CD8-positive, alpha-beta T cell (primary cell): ENCODE measurements at regions of chr6 and their contacts with region 1.

Region 1: GRCh38 chr6:26156076-26156849 is 69.0 kb downstream of the HFE start:
- DNase-seq: peak; percentile 77 to 96 (median 84)
- ATAC-seq: peak; percentile 39
- H3K4me3 ChIP-seq: peak overlapping the region; percentile 51 to 86
- H3K4me3 Mint-ChIP-seq: peak overlapping the region; percentile 94
- H3K27ac ChIP-seq: peak overlapping the region; percentile 85 to 98
- H3K27ac Mint-ChIP-seq: peak overlapping the region; percentile 98
- H3K4me1 ChIP-seq: peaks cover 20% of the 10 kb centered on the region
- H3K4me1 Mint-ChIP-seq: peaks cover 34% of the 10 kb centered on the region
- H3K27me3 ChIP-seq: no peaks in the 10 kb centered on the region
- H3K27me3 Mint-ChIP-seq: no peaks in the 10 kb centered on the region
- CTCF ChIP-seq: no peak

Region 2: GRCh38 chr6:25556516-25556915 is 599.7 kb before region 1 on chr6:
- CTCF ChIA-PET with region 1: no interaction called
- POLR2A ChIA-PET with region 1: no interaction called
- intact Hi-C with region 1: no loop called
- DNase-seq: peak; percentile 61 to 83 (median 76)
- ATAC-seq: peak; percentile 54
- H3K4me3 ChIP-seq: no peak overlapping the region
- H3K4me3 Mint-ChIP-seq: no peak overlapping the region
- H3K27ac ChIP-seq: no peak overlapping the region
- H3K27ac Mint-ChIP-seq: no peak overlapping the region
- H3K4me1 ChIP-seq: no peaks in the 10 kb centered on the region
- H3K4me1 Mint-ChIP-seq: peaks cover 2% of the 10 kb centered on the region
- H3K27me3 ChIP-seq: no peaks in the 10 kb centered on the region
- H3K27me3 Mint-ChIP-seq: no peaks in the 10 kb centered on the region
- CTCF ChIP-seq: peak; percentile 93

Region 3: DNA sequence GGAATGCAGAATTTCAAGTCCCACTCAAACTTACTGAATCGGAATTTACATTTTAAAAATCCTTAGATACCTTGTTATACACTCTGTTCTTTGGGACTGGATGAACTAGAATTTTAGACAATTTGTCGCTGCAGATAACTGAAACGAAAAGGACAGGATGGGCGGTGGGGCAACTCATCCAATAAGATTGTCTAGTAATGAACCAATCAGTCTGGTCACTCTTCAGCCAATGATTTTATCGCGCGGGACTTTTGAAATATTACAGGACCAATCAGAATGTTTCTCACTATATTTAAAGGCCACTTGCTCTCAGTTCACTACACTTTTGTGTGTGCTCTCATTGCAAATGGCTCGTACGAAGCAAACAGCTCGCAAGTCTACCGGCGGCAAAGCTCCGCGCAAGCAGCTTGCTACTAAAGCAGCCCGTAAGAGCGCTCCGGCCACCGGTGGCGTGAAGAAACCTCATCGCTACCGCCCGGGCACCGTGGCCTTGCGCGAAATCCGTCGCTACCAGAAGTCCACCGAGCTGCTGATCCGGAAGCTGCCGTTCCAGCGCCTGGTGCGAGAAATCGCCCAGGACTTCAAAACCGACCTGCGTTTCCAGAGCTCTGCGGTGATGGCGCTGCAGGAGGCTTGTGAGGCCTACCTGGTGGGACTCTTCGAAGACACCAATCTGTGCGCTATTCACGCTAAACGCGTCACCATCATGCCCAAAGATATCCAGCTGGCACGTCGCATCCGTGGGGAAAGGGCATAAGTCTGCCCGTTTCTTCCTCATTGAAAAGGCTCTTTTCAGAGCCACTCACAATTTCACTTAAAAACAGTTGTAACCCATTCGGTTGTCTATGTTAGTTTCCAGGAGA is 111.0 kb before region 1 on chr6:
- CTCF ChIA-PET with region 1: interaction called, 3 read pairs
- POLR2A ChIA-PET with region 1: interaction called, 149 read pairs
- intact Hi-C with region 1: no loop called
- DNase-seq: peak; percentile 54 to 93 (median 79)
- ATAC-seq: peak; percentile 59
- H3K4me3 ChIP-seq: peak overlapping the region; percentile 67 to 76
- H3K4me3 Mint-ChIP-seq: peak overlapping the region; percentile 89
- H3K27ac ChIP-seq: peak overlapping the region; percentile 73 to 81
- H3K27ac Mint-ChIP-seq: peak overlapping the region; percentile 98
- H3K4me1 ChIP-seq: peaks cover 7% of the 10 kb centered on the region
- H3K4me1 Mint-ChIP-seq: peaks cover 14% of the 10 kb centered on the region
- H3K27me3 ChIP-seq: no peaks in the 10 kb centered on the region
- H3K27me3 Mint-ChIP-seq: no peaks in the 10 kb centered on the region
- CTCF ChIP-seq: no peak

Region 4: GRCh38 chr6:26129656-26130055 is 26.6 kb before region 1 on chr6:
- CTCF ChIA-PET with region 1: interaction called, 62 read pairs
- POLR2A ChIA-PET with region 1: interaction called, 1,910 read pairs
- intact Hi-C with region 1: loop called in 1 of 2 experiments (anchors 1 kb)
- DNase-seq: peak in 1 of 9 experiments; percentile 40
- ATAC-seq: peak; percentile 15
- H3K4me3 ChIP-seq: no peak overlapping the region
- H3K4me3 Mint-ChIP-seq: no peak overlapping the region
- H3K27ac ChIP-seq: peak overlapping the region in 1 of 2 experiments; percentile 16
- H3K27ac Mint-ChIP-seq: peak overlapping the region; percentile 47
- H3K4me1 ChIP-seq: peaks cover 34% of the 10 kb centered on the region
- H3K4me1 Mint-ChIP-seq: peaks cover 60% of the 10 kb centered on the region
- H3K27me3 ChIP-seq: no peaks in the 10 kb centered on the region
- H3K27me3 Mint-ChIP-seq: no peaks in the 10 kb centered on the region
- CTCF ChIP-seq: no peak

Region 5: DNA sequence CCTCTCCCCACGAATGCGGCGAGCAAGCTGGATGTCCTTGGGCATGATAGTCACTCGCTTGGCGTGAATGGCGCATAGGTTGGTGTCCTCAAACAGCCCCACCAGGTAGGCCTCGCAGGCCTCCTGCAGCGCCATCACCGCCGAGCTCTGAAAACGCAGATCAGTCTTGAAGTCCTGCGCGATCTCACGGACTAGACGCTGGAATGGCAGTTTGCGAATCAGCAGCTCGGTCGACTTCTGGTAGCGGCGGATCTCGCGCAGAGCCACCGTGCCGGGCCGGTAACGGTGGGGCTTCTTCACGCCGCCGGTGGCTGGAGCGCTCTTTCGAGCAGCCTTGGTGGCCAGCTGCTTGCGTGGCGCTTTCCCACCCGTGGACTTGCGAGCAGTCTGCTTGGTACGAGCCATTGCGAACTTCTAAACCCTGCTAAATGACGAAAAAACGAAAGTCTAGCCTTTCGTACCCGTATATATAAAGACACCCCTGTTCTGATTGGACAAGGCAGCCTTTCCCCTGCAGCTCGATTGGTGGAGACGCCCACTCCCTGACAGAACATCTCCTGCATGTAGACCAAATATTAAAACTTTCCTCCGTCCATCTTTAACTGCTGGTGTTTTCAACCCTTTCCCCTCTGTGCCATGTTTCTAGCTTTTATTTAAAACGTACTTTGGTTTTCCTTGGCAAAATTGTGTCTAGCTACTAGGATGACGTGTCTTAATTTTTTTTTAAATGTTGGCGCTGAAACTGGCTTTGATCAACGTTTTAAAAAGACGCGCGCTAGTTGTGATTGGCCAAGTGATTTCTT is 40.8 kb after region 1 on chr6:
- CTCF ChIA-PET with region 1: interaction called, 22 read pairs
- POLR2A ChIA-PET with region 1: interaction called, 1,041 read pairs
- intact Hi-C with region 1: loop called (anchors 1 kb)
- DNase-seq: peak; percentile 53 to 95 (median 79)
- ATAC-seq: peak; percentile 57
- H3K4me3 ChIP-seq: peak overlapping the region; percentile 78 to 82
- H3K4me3 Mint-ChIP-seq: peak overlapping the region; percentile 96
- H3K27ac ChIP-seq: peak overlapping the region; percentile 88 to 89
- H3K27ac Mint-ChIP-seq: peak overlapping the region; percentile 99
- H3K4me1 ChIP-seq: peaks cover 20% of the 10 kb centered on the region
- H3K4me1 Mint-ChIP-seq: peaks cover 44% of the 10 kb centered on the region
- H3K27me3 ChIP-seq: no peaks in the 10 kb centered on the region
- H3K27me3 Mint-ChIP-seq: no peaks in the 10 kb centered on the region
- CTCF ChIP-seq: no peak

Region 6: DNA sequence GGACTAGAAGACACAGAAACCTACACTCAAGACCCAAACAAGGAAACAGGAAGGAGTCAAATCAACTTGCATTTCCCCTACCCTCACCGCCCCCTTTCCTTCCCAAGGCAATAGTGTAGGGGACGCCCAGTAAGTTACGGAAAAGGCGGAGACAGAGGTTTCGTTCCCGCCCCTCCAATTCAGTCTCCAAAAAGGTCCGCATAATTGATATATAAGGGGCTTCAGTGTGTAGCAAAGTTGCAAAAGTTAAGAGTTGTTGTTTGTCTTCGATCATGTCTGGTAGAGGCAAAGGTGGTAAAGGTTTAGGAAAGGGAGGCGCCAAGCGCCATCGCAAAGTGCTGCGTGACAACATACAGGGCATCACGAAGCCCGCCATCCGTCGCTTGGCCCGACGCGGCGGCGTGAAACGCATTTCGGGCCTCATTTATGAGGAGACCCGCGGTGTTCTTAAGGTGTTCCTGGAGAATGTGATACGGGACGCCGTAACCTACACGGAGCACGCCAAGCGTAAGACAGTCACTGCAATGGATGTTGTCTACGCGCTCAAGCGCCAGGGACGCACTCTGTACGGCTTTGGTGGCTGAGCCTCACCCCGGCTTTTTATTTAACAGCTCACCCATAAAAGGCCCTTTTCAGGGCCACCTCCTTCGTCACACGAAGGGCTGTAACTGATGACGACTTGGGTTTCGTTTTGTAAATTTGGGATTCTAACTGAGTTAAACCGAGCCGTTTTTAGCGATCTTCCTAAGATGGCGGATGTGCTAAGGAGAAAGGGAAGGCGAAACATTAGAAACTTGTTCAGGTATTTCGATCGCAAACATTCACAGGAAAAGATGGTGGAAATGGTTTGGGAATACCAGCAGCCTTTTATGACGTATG is 84.1 kb after region 1 on chr6:
- CTCF ChIA-PET with region 1: no interaction called
- POLR2A ChIA-PET with region 1: interaction called, 201 read pairs
- intact Hi-C with region 1: no loop called
- DNase-seq: peak; percentile 40 to 93 (median 67)
- ATAC-seq: peak; percentile 81
- H3K4me3 ChIP-seq: peak overlapping the region; percentile 50 to 62
- H3K4me3 Mint-ChIP-seq: peak overlapping the region; percentile 88
- H3K27ac ChIP-seq: peak overlapping the region; percentile 74 to 88
- H3K27ac Mint-ChIP-seq: peak overlapping the region; percentile 98
- H3K4me1 ChIP-seq: peaks cover 8% of the 10 kb centered on the region
- H3K4me1 Mint-ChIP-seq: peaks cover 21% of the 10 kb centered on the region
- H3K27me3 ChIP-seq: no peaks in the 10 kb centered on the region
- H3K27me3 Mint-ChIP-seq: no peaks in the 10 kb centered on the region
- CTCF ChIP-seq: no peak

Region 7: DNA sequence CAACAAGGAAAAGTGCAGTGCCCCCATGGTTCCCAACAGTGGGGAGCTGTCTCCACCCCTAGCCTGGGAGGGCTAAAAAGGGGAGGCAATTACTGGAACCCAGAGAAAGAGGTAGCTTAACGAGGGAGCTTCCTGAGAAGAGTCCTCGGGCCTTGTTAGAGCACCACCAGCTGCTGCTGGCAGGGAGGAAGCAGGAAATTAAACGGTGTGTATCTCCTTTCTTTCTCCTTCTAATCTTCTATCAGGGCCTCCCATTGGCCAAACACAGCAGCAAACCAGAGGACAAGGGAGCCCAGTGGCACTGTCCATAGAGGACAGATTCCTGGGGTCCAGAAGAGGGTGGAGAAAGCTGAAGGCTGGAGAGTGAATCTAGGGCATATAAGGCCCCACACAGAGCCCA is 219.0 kb after region 1 on chr6:
- CTCF ChIA-PET with region 1: no interaction called
- POLR2A ChIA-PET with region 1: no interaction called
- intact Hi-C with region 1: no loop called
- DNase-seq: no peak
- ATAC-seq: no peak
- H3K4me3 ChIP-seq: no peak overlapping the region
- H3K4me3 Mint-ChIP-seq: no peak overlapping the region
- H3K27ac ChIP-seq: peak overlapping the region in 1 of 2 experiments; percentile 31
- H3K27ac Mint-ChIP-seq: peak overlapping the region; percentile 89
- H3K4me1 ChIP-seq: peaks cover 30% of the 10 kb centered on the region
- H3K4me1 Mint-ChIP-seq: peaks cover 51% of the 10 kb centered on the region
- H3K27me3 ChIP-seq: no peaks in the 10 kb centered on the region
- H3K27me3 Mint-ChIP-seq: no peaks in the 10 kb centered on the region
- CTCF ChIP-seq: no peak

Region 8: DNA sequence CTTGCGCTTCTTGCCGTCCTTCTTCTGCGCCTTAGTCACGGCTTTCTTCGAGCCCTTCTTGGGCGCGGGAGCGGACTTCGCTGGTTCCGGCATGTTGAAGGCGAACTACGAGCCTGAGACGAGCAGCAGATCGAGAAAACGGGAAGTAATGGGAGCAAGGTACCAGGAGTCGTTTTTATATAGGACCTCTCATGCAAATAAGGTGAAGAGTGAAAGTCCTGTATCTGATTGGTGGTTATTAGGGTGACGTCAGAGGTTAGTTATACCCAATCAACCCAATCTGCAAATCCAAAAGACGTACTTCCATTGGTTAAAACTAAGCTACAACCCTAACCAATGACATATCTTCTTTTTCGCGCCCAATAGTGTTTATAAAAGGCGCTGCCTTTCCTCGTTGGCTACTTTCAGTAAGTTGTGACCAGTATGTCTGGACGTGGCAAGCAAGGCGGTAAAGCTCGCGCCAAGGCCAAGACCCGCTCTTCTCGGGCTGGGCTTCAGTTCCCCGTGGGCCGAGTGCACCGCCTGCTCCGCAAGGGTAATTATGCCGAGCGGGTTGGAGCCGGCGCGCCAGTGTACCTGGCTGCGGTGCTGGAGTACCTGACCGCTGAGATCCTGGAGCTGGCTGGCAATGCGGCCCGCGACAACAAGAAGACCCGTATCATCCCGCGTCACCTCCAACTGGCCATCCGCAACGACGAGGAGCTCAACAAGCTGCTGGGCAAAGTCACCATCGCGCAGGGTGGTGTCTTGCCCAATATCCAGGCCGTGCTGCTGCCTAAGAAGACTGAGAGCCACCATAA is 990.6 kb after region 1 on chr6:
- CTCF ChIA-PET with region 1: no interaction called
- POLR2A ChIA-PET with region 1: interaction called, 81 read pairs
- intact Hi-C with region 1: loop called in 1 of 2 experiments (anchors 2 kb)
- DNase-seq: peak; percentile 56 to 98 (median 74)
- ATAC-seq: peak; percentile 85
- H3K4me3 ChIP-seq: peak overlapping the region; percentile 71 to 77
- H3K4me3 Mint-ChIP-seq: no peak overlapping the region
- H3K27ac ChIP-seq: peak overlapping the region; percentile 84 to 91
- H3K27ac Mint-ChIP-seq: no peak overlapping the region
- H3K4me1 ChIP-seq: peaks cover 11% of the 10 kb centered on the region
- H3K4me1 Mint-ChIP-seq: peaks cover 13% of the 10 kb centered on the region
- H3K27me3 ChIP-seq: no peaks in the 10 kb centered on the region
- H3K27me3 Mint-ChIP-seq: no peaks in the 10 kb centered on the region
- CTCF ChIP-seq: no peak

Region 9: DNA sequence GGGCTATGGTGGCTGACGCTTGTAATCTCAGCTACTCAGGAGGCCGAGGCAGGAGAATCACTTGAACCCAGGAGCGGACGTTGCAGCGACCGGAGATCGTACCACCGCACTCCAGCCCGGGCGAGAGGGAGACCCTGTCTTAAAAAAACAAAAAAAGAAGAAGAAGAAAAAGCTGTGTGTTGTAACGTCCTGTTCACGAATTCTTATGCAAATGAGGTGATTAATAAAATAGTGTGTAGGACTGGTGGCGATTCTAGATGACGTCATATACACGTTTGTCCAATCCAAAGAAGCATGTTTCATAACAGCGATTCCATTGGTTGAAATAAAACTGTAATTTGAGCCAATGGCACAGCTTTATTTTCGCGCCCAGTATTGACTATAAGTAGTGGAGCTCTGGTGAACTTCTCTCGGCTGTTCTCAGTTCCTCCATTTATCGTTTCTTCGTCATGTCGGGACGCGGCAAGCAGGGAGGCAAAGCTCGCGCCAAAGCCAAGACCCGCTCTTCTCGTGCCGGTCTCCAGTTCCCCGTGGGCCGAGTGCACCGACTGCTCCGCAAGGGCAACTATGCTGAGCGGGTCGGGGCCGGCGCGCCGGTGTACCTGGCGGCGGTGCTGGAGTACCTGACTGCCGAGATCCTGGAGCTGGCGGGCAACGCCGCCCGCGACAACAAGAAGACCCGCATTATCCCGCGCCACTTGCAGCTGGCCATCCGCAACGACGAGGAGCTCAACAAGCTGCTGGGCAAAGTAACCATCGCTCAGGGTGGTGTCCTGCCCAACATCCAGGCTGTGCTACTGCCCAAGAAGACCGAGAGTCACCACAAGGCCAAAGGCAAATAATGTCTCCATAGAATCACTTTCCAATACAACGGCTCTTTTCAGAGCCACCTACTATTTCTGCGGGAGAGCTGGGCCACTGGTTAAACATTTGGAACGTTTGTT is 1708.9 kb after region 1 on chr6:
- CTCF ChIA-PET with region 1: no interaction called
- POLR2A ChIA-PET with region 1: interaction called, 30 read pairs
- intact Hi-C with region 1: no loop called
- DNase-seq: peak; percentile 37 to 97 (median 56)
- ATAC-seq: peak; percentile 83
- H3K4me3 ChIP-seq: peak overlapping the region; percentile 71 to 79
- H3K4me3 Mint-ChIP-seq: peak overlapping the region; percentile 95
- H3K27ac ChIP-seq: peak overlapping the region; percentile 67 to 83
- H3K27ac Mint-ChIP-seq: peak overlapping the region; percentile 94
- H3K4me1 ChIP-seq: peaks cover 17% of the 10 kb centered on the region
- H3K4me1 Mint-ChIP-seq: peaks cover 38% of the 10 kb centered on the region
- H3K27me3 ChIP-seq: no peaks in the 10 kb centered on the region
- H3K27me3 Mint-ChIP-seq: no peaks in the 10 kb centered on the region
- CTCF ChIP-seq: no peak